GM13976 (cell line): ENCODE measurements at regions of chrX and their contacts with region 1.

Region 1: GRCh38 chrX:3806630-3807029 is 93.2 kb upstream of the PRKX start:
- DNase-seq: no peak
- CTCF ChIP-seq: no peak

Region 2: DNA sequence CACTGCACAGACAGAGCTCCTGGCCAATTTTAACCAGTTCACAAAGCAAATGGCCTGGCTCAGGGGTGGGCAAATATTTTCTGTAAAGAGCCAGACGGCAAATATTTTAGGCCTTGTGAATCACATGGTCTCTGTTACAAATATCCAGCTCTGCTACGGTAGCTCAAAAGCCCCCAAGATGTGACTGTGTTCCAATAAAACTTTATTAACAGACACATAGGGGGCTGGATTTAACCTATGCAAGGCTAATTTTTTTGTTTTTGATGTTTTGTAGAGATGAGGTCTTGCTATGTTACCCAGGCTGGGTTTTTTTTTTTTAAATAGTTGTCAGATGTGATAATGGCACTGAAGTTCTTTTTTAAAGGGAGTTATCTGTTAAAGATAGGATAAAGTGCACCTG is 158.5 kb before region 1 on chrX:
- in situ Hi-C with region 1: loop called (anchors 10 kb)
- DNase-seq: no peak
- CTCF ChIP-seq: no peak